Motor neuron (in vitro differentiated cells): ENCODE measurements at regions of chr15 and their contacts with region 1.

Region 1: GRCh38 chr15:90221246-90221900 is 12.4 kb downstream of the CIB1 start:
- ATAC-seq: peak; percentile 70 to 92 (median 80)
- H3K4me3 ChIP-seq: no peak overlapping the region
- H3K27ac ChIP-seq: no peak overlapping the region
- H3K4me1 ChIP-seq: no peaks in the 10 kb centered on the region

Region 2: DNA sequence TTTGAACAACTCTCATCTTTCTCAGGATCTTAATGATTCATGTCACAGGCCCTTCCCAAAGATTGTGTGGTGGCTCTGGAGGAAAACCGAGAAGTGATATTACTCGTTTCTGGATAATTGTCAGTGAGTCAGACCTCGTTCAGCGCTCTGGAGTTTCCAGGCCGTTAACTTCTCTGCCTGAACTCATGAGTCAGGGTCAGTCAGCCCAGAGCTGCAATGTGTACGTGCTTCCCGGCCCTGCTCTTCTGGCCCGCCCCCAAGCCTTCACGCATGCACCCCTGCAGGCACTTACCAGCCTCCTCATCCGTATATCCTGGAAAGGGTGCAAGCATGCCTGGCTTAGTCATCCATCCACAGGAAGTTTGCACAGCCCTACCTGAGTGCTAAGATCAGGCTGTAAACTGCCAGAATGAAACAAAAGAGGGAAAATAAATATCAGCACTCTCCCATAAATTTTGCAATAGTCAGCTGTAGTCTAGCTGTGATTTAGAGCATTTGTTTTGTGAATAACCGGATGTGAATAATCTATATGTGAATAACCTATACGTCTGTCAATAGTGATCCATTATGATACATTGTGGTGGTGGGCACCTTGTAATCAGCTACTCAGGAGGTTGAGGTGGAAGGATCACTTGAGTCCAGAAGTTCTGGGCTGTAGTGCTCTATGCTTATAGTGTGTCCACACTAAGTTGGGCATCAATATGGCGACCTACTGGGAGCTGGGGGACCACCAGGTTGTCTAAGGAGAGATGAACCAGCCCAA is 55.5 kb before region 1 on chr15:
- in situ Hi-C with region 1: loop called in 1 of 9 experiments (anchors 10 kb)
- ATAC-seq: peak; percentile 97 to 100 (median 99)
- H3K4me3 ChIP-seq: no peak overlapping the region
- H3K27ac ChIP-seq: peak overlapping the region; percentile 42 to 48
- H3K4me1 ChIP-seq: peaks cover 7 to 9% of the 10 kb centered on the region in 2 donors

Region 3: DNA sequence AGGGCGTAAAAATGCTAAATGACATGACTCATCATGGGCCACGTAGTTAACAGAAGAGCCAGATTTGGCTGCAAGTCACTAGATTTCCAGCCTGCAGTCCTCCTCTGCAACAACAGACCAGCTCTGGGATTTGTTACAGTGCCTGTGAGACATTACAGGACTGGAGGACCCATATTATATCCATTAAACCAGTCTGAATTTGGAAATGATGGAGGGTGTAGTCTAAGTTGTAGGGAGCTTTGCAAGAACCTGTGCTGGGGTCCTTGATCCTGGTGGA is 141.5 kb after region 1 on chr15:
- in situ Hi-C with region 1: no loop called
- ATAC-seq: peak; percentile 72 to 91 (median 79)
- H3K4me3 ChIP-seq: no peak overlapping the region
- H3K27ac ChIP-seq: peak overlapping the region; percentile 21 to 39
- H3K4me1 ChIP-seq: peaks cover 5 to 9% of the 10 kb centered on the region in 2 donors